ENCODE measurements at regions of chr7 and their contacts with region 1.

Region 1: DNA sequence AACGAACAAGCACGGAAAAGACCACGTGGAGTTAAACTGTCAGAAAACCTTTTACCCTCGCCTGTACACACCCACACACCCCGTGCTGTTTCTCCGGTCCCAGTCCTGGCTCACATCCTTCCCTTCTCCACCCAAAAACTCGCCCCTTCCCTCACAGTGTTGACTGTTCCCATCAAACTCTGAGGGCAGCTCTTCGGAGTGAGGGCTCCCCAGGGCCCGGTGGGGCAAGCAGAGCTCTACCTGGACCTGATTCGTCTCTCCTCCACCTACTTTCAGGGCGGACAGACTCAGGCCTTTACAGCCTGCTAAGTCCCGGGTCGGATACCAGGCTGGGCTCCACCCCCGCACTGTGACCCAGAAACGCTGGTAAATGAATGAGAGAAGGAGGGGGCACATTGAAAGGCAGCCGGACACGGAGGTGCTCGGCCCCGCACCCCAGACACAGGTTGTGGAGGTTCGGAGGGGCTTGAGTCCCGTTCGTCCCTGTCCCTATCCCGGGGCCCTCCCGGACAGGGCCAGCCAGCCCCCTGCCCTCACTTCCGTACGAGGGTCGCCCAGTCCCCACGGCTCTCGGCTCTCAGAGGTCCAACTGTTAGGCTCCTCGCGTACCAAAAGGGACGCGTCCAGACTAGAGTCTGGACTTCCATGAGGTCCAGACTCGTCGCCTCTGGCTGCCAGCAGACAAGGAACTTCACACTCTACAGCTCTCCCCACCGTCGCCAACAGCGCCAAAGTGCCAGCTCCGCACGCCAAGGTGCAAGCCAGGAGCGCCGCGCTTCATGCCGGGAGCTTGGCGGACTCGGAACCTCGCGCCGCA is 31.7 kb upstream of the ASL start:
- DNase-seq: peak; percentile 73
- H3K4me3 ChIP-seq: peak overlapping the region; percentile 63
- H3K27ac ChIP-seq: no peak overlapping the region
- H3K4me1 ChIP-seq: peaks cover 30% of the 10 kb centered on the region
- H3K27me3 ChIP-seq: no peaks in the 10 kb centered on the region

Region 2: GRCh38 chr7:65832281-65832680 is 211.6 kb before region 1 on chr7:
- in situ Hi-C with region 1: no loop called
- DNase-seq: peak; percentile 39
- H3K4me3 ChIP-seq: no peak overlapping the region
- H3K27ac ChIP-seq: no peak overlapping the region
- H3K4me1 ChIP-seq: no peaks in the 10 kb centered on the region
- H3K27me3 ChIP-seq: no peaks in the 10 kb centered on the region

Region 3: GRCh38 chr7:66099616-66100474 is 56.0 kb after region 1 on chr7:
- in situ Hi-C with region 1: loop called (anchors 10 kb)
- DNase-seq: peak; percentile 87
- H3K4me3 ChIP-seq: peak overlapping the region; percentile 75
- H3K27ac ChIP-seq: peak overlapping the region; percentile 78
- H3K4me1 ChIP-seq: peaks cover 15% of the 10 kb centered on the region
- H3K27me3 ChIP-seq: no peaks in the 10 kb centered on the region